Colonic mucosa (tissue), 4 donors: ENCODE measurements at regions of chr13 and their contacts with region 1.

Region 1: GRCh38 chr13:73835138-73835721 is 299.0 kb downstream of the KLF12 start:
- DNase-seq: no peak
- H3K4me3 ChIP-seq: no peak overlapping the region
- H3K27ac ChIP-seq: no peak overlapping the region
- H3K4me1 ChIP-seq: no peaks in the 10 kb centered on the region
- H3K27me3 ChIP-seq: no peaks in the 10 kb centered on the region
- CTCF ChIP-seq: peak; percentile 38

Region 2: GRCh38 chr13:73754727-73755292 is 80.4 kb before region 1 on chr13:
- intact Hi-C with region 1: loop called (anchors 10 kb)
- DNase-seq: peak; percentile 69
- H3K4me3 ChIP-seq: no peak overlapping the region
- H3K27ac ChIP-seq: no peak overlapping the region
- H3K4me1 ChIP-seq: no peaks in the 10 kb centered on the region
- H3K27me3 ChIP-seq: no peaks in the 10 kb centered on the region
- CTCF ChIP-seq: peak; percentile 54

Region 3: GRCh38 chr13:74287724-74288169 is 452.5 kb after region 1 on chr13:
- intact Hi-C with region 1: loop called (anchors 5 kb)
- DNase-seq: peak; percentile 79
- H3K4me3 ChIP-seq: no peak overlapping the region
- H3K27ac ChIP-seq: no peak overlapping the region
- H3K4me1 ChIP-seq: peaks cover 15% of the 10 kb centered on the region
- H3K27me3 ChIP-seq: no peaks in the 10 kb centered on the region
- CTCF ChIP-seq: no peak

Region 4: GRCh38 chr13:75219479-75220237 is 1384.4 kb after region 1 on chr13:
- intact Hi-C with region 1: loop called (anchors 5 kb)
- DNase-seq: peak; percentile 84
- H3K4me3 ChIP-seq: peak overlapping the region; percentile 8
- H3K27ac ChIP-seq: no peak overlapping the region
- H3K4me1 ChIP-seq: no peaks in the 10 kb centered on the region
- H3K27me3 ChIP-seq: no peaks in the 10 kb centered on the region
- CTCF ChIP-seq: peak; percentile 92